CD14-positive monocyte (primary cell): ENCODE measurements at regions of chr1 and their contacts with region 1.

Region 1: GRCh38 chr1:42846257-42847110 is at the start of gene ZNF691:
- DNase-seq: peak; percentile 90 to 97 (median 92)
- H3K4me3 ChIP-seq: peak within 1 kb of the TSS; percentile 66 to 91 (median 77)
- H3K4me3 Mint-ChIP-seq: peak within 1 kb of the TSS; percentile 95 to 98
- H3K27ac ChIP-seq: peak within 1 kb of the TSS; percentile 18 to 80
- H3K27ac Mint-ChIP-seq: peak within 1 kb of the TSS; percentile 54 to 90 (median 85)
- H3K4me1 ChIP-seq: peaks cover 14 to 20% of the 10 kb centered on the region in 2 donors
- H3K4me1 Mint-ChIP-seq: peaks cover 24% of the 10 kb centered on the region
- H3K27me3 ChIP-seq: no peaks in the 10 kb centered on the region
- H3K27me3 Mint-ChIP-seq: peaks cover 0 to 1% (median 0%) of the 10 kb centered on the region in 3 donors
- CTCF ChIP-seq: peak; percentile 37
- polyA plus RNA-seq, gene ZNF691: 1.3 to 6.7 (median 1.8) TPM

Region 2: GRCh38 chr1:42681741-42682483 is 164.6 kb before region 1 on chr1 and contains the start of gene YBX1:
- intact Hi-C with region 1: loop called in 1 of 2 experiments (anchors 10 kb)
- DNase-seq: peak; percentile 97 to 99 (median 97)
- H3K4me3 ChIP-seq: peak within 1 kb of the TSS; percentile 58 to 95 (median 85)
- H3K4me3 Mint-ChIP-seq: peak within 1 kb of the TSS; percentile 91 to 94
- H3K27ac ChIP-seq: peak within 1 kb of the TSS; percentile 78 to 92
- H3K27ac Mint-ChIP-seq: peak within 1 kb of the TSS; percentile 91 to 98 (median 96)
- H3K4me1 ChIP-seq: peaks cover 36 to 50% of the 10 kb centered on the region in 2 donors
- H3K4me1 Mint-ChIP-seq: peaks cover 49% of the 10 kb centered on the region
- H3K27me3 ChIP-seq: no peaks in the 10 kb centered on the region
- H3K27me3 Mint-ChIP-seq: no peaks in the 10 kb centered on the region
- CTCF ChIP-seq: no peak
- polyA plus RNA-seq, gene YBX1: 65.7 to 301 (median 70.2) TPM

Region 3: GRCh38 chr1:42816585-42817434 is 29.7 kb before region 1 on chr1 and contains the starts of genes ERMAP and SVBP:
- intact Hi-C with region 1: loop called in 1 of 2 experiments (anchors 5 kb)
- DNase-seq: peak; percentile 84 to 87 (median 85)
- H3K4me3 ChIP-seq: peak within 1 kb of the TSS; percentile 72 to 94 (median 86)
- H3K4me3 Mint-ChIP-seq: peak within 1 kb of the TSS; percentile 85 to 92
- H3K27ac ChIP-seq: peak within 1 kb of the TSS; percentile 81 to 88
- H3K27ac Mint-ChIP-seq: peak within 1 kb of the TSS; percentile 87 to 98 (median 92)
- H3K4me1 ChIP-seq: peaks cover 18 to 20% of the 10 kb centered on the region in 2 donors
- H3K4me1 Mint-ChIP-seq: peaks cover 38% of the 10 kb centered on the region
- H3K27me3 ChIP-seq: no peaks in the 10 kb centered on the region
- H3K27me3 Mint-ChIP-seq: peaks cover 0 to 2% (median 0%) of the 10 kb centered on the region in 3 donors
- CTCF ChIP-seq: no peak
- polyA plus RNA-seq, gene ERMAP: 6.0 to 22.7 (median 8.4) TPM
- polyA plus RNA-seq, gene SVBP: 19.5 to 56.1 (median 54.3) TPM

Region 4: DNA sequence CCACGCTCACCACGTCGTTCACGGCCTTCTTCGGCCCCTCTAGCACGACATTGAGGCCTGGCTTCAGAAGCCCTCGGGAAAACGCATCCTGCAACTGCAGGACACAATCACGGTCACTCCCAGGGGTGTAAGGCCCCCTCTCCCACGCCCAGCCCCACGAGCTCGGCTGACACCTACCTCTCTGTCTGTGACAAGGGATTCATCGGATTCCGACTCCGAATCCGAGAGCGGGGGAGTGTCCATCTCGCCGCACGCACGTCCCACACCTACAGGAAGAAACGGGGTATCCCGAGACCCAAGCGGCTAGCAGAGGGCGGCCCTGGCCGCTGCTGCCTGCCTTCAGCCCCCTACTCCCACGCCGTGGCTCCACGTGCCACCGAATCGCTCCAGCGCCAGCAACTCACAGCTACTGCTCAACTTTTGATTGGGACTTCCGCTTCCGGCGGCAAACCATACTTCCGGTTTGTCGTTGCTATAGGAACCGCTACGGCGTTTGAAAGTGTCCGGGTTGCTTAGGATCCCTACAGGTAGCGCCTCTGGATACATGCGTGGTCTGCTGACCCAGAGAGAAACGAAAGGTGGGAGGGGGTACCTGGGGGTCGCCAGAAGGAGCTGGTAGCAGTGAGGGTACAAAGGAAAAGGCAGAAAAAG is 325.5 kb after region 1 on chr1 and contains the starts of genes CFAP57 and EBNA1BP2:
- intact Hi-C with region 1: loop called in 1 of 2 experiments (anchors 10 kb)
- DNase-seq: peak; percentile 95
- H3K4me3 ChIP-seq: peak within 1 kb of the TSS; percentile 62 to 98 (median 80)
- H3K4me3 Mint-ChIP-seq: peak within 1 kb of the TSS; percentile 94 to 96
- H3K27ac ChIP-seq: peak within 1 kb of the TSS in 1 of 2 donors; percentile 71
- H3K27ac Mint-ChIP-seq: peak within 1 kb of the TSS; percentile 71 to 97 (median 95)
- H3K4me1 ChIP-seq: peaks cover 9 to 16% of the 10 kb centered on the region in 2 donors
- H3K4me1 Mint-ChIP-seq: peaks cover 17% of the 10 kb centered on the region
- H3K27me3 ChIP-seq: peaks cover 0 to 23% of the 10 kb centered on the region in 2 donors
- H3K27me3 Mint-ChIP-seq: peaks cover 5 to 17% (median 13%) of the 10 kb centered on the region in 3 donors
- CTCF ChIP-seq: no peak
- polyA plus RNA-seq, gene CFAP57: 0.01 to 0.05 TPM in 2 of 3 donors, not detected in the other
- polyA plus RNA-seq, gene EBNA1BP2: 10.2 to 37.2 (median 30.9) TPM